Activated CD4-positive, alpha-beta T cell treated with anti-CD3 and anti-CD28 coated beads for 36 hours (primary cell): ENCODE measurements at regions of chr11 and their contacts with region 1.

Region 1: DNA sequence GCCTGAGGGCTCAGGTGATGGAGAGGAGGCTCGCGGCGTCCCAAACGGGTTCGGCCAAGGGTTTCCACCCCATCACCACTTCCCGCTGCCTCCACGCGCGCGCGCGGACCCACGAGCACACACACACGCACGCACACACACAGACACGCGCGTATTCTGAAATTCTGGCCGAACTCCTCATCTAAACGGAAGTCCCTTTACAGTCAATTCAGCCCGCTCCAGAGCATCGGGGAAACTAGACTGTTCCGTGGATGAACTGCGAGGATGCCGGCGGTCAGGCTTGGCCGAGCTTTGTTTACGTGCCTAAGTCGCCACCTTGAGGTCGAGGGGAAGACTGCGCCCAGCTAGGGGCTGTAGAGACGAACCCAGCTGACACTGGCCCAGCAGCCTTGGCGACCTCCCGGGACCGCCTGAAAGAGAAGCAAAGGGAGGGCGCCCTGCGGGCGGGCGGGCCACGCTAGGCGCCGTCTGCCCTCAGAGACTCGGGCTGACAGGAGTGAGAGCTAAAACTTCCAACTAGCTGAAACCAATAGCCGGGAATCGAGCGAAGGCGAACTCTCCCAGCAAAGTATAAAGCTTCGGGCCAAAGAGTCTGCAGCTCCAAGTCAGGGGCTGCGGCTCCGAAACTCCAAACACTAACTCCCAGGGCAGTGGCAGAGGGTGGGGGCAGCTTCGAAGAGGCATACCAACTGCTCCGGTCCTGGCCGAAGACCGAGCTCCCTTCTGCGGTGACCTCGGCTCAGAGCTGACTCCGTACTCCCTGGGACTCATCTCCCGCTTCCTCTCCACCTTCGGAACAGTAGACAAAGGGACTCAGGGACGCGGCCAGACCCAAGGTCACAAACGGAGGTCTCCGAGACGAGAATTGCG is 124.7 kb upstream of the C11orf58 start:
- DNase-seq: peak; percentile 87
- ATAC-seq: peak; percentile 97
- H3K4me3 Mint-ChIP-seq: peak overlapping the region; percentile 62
- H3K27ac Mint-ChIP-seq: no peak overlapping the region
- H3K4me1 Mint-ChIP-seq: peaks cover 22% of the 10 kb centered on the region
- H3K27me3 Mint-ChIP-seq: peaks cover 48% of the 10 kb centered on the region

Region 2: DNA sequence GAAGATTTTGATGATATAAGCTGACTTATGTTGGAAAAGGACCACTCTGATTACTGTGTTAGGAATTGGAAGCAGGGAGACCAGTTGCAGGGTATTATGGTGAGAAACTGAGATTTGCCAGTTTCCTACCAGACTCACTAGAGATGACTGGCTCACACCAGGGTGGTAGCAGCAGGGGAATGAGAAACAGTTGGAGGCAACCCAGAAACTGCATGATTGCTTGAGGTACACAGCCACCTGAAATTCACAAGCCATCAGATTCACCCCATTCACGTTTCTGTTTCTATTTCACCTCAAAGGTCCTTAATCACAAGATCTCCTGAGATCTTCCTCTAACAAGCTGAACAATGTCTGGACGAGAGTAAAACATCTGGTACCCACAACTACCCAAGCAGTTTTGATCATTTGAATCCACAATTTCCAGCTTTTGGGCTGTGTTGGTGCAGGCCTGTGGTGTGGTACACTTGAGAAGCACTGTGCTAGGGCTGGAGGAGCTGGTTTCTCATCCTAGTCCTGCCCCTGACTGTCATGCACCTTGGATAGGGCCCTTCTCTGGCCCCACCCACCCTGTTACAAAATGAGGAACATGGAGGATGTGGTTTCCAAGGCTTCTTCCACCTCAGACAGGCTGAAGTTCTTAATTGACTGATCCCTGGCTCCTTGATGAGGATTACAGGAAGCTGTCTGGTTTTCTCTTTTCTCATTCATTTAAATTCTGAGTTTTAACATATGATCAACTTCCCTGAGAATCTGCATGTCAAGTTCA is 1265.6 kb before region 1 on chr11:
- CTCF ChIA-PET with region 1: no interaction called
- POLR2A ChIA-PET with region 1: no interaction called
- intact Hi-C with region 1: no loop called
- DNase-seq: no peak
- ATAC-seq: no peak
- H3K4me3 Mint-ChIP-seq: no peak overlapping the region
- H3K27ac Mint-ChIP-seq: no peak overlapping the region
- H3K4me1 Mint-ChIP-seq: no peaks in the 10 kb centered on the region
- H3K27me3 Mint-ChIP-seq: peaks cover 4% of the 10 kb centered on the region

Region 3: DNA sequence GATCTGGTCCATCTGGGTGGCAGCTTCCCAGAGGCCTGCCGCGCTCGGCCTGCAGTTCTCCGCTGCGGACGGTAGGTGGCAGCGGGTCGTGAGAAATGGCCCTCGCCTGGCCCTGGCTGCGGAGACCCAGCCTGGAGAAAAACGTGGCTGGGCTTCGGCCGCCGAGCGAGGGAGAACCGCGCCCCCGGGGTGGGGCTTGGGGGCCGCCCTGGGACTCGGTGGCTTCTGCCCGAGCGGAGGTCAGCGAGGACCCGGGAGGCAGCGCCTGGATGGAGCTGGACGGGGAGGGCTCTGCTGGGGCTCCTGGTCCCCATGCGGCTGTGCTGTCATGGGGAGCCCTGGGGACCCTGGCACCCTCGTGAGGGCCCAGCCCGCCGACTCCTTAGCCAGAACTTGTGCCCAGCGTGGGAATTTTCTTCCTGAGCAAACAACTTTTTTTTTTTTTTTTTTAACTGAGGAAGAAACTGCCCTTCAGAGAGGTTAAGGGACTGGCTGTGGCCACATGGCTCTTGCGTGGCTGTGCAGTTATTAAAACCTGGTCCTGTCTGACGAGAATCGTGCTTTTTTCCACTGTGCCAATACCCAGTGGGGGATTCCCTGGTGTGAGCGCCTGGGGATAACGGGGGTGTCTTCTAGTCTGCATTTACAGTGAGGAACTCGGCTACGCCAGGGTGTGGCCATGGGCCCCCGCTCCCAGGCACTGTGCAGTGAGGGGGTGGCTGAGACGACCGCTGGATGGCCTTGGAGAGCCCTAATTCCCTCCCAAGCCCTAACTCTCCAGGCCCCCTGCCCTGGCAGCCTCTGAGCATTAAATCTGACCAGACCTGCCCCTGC is 963.4 kb before region 1 on chr11:
- CTCF ChIA-PET with region 1: interaction called, 16 read pairs
- POLR2A ChIA-PET with region 1: no interaction called
- intact Hi-C with region 1: loop called (anchors 1 to 2 kb)
- DNase-seq: peak; percentile 86
- ATAC-seq: peak; percentile 93
- H3K4me3 Mint-ChIP-seq: no peak overlapping the region
- H3K27ac Mint-ChIP-seq: no peak overlapping the region
- H3K4me1 Mint-ChIP-seq: peaks cover 4% of the 10 kb centered on the region
- H3K27me3 Mint-ChIP-seq: peaks cover 26% of the 10 kb centered on the region

Region 4: DNA sequence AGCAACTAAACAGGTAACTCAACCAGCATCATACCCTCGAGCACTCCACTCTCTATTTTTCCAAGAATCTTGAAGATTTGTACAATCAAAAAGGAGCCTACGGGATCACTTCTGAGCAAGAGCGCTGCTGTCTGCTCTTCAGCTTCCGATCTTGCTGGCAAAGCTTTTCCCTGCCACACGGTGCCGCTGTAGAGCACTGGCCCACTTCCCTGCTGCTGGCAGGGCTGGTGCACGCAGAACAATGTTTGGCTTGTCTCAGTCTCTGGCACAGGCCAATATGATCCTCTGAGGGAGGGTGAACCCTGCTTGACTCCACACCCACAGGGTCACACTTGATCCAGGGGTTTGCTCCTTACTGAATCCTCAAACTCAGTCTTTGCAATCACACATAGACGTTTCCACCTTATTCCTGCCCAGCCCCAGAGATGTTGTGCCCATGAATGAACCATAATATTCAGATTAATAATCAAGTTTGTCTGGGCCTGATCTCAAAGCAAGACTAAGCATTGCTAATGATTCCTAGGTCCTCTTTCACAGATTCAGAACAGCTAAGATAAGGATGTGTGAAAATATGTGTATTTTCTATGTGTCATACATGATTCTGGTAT is 794.0 kb before region 1 on chr11:
- CTCF ChIA-PET with region 1: interaction called, 6 read pairs
- POLR2A ChIA-PET with region 1: no interaction called
- intact Hi-C with region 1: loop called (anchors 5 kb)
- DNase-seq: peak; percentile 70
- ATAC-seq: peak; percentile 68
- H3K4me3 Mint-ChIP-seq: no peak overlapping the region
- H3K27ac Mint-ChIP-seq: no peak overlapping the region
- H3K4me1 Mint-ChIP-seq: peaks cover 15% of the 10 kb centered on the region
- H3K27me3 Mint-ChIP-seq: peaks cover 15% of the 10 kb centered on the region

Region 5: DNA sequence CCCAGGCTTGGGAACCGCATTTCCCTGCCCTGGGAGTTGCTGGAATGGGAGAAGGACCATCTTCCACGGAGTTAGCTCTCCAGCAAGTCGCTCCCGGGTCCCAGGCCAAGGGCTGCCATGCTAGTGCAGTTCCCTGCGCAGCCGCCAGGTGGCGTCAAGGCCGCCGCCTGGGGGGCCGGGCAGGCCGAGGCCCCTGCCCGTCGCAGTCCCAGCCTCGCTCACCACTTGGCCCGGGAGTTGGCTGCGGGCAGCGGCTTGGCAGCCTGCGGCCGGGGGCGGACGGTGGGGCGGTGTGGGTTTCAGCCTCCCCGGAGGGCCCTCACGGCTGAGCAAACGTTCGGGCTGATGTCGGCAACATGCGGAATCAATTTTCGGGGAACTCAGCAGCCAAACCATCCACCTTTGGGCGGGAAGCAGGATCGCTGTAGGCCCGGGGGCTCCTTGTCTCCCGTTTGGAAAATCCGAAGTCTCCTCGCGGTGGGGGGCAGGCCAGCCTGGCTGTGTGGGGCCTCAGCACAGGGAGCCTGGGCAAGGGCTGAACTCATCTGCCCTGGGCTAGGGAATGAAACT is 672.5 kb before region 1 on chr11:
- CTCF ChIA-PET with region 1: interaction called, 11 read pairs
- POLR2A ChIA-PET with region 1: no interaction called
- intact Hi-C with region 1: loop called (anchors 1 to 5 kb)
- DNase-seq: peak; percentile 55
- ATAC-seq: peak; percentile 30
- H3K4me3 Mint-ChIP-seq: no peak overlapping the region
- H3K27ac Mint-ChIP-seq: no peak overlapping the region
- H3K4me1 Mint-ChIP-seq: no peaks in the 10 kb centered on the region
- H3K27me3 Mint-ChIP-seq: peaks cover 2% of the 10 kb centered on the region

Region 6: GRCh38 chr11:16669799-16670415 is 56.2 kb after region 1 on chr11:
- CTCF ChIA-PET with region 1: no interaction called
- POLR2A ChIA-PET with region 1: no interaction called
- intact Hi-C with region 1: no loop called
- DNase-seq: no peak
- ATAC-seq: no peak
- H3K4me3 Mint-ChIP-seq: no peak overlapping the region
- H3K27ac Mint-ChIP-seq: no peak overlapping the region
- H3K4me1 Mint-ChIP-seq: no peaks in the 10 kb centered on the region
- H3K27me3 Mint-ChIP-seq: peaks cover 11% of the 10 kb centered on the region